Dorsolateral prefrontal cortex (tissue), 120 donors: ENCODE measurements at regions of chr4 and their contacts with region 1.

Region 1: GRCh38 chr4:3442959-3443749 is 1.4 kb downstream of the HGFAC start:
- DNase-seq: peak in 3 of 10 donors; percentile 20 to 76 (median 36)
- H3K4me3 ChIP-seq: no peak overlapping the region
- H3K27ac ChIP-seq: no peak overlapping the region
- H3K27me3 ChIP-seq: no peaks in the 10 kb centered on the region
- CTCF ChIP-seq: peak; percentile 79 to 100 (median 98)

Region 2: GRCh38 chr4:3199653-3200422 is 243.3 kb before region 1 on chr4:
- intact Hi-C with region 1: loop called in 1 of 2 experiments (anchors 5 kb)
- DNase-seq: no peak
- H3K4me3 ChIP-seq: no peak overlapping the region
- H3K27ac ChIP-seq: peak overlapping the region in 22 of 59 donors; percentile 8 to 76 (median 44)
- H3K27me3 ChIP-seq: no peaks in the 10 kb centered on the region
- CTCF ChIP-seq: no peak

Region 3: DNA sequence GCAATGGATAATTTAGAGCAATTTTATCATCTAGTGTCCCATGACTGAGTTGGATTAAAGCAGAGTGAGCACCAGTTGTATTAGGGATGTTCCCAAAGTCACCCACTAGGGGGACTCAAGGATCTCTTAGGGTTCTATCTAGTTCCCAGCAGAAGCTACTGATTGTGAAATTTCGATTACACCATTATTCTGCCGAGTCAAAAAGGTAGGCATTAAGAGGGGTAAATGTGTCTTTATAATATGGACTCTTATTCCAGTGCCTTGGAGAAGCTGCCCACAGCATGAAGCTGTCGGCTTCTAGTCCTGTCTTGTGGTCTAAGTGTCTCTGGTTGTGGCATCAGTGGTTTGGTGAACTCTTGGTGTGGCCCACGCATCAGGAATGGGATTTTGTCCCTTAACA is 97.0 kb before region 1 on chr4:
- intact Hi-C with region 1: loop called (anchors 2 to 5 kb)
- DNase-seq: peak in 2 of 10 donors; percentile 64 to 70
- H3K4me3 ChIP-seq: peak overlapping the region in 20 of 59 donors; percentile 2 to 38 (median 24)
- H3K27ac ChIP-seq: peak overlapping the region in 8 of 59 donors; percentile 11 to 51 (median 35)
- H3K27me3 ChIP-seq: no peaks in the 10 kb centered on the region
- CTCF ChIP-seq: peak; percentile 60 to 93 (median 85)